Left cardiac atrium (tissue), 4 donors: ENCODE measurements at regions of chr2 and their contacts with region 1.

Region 1: DNA sequence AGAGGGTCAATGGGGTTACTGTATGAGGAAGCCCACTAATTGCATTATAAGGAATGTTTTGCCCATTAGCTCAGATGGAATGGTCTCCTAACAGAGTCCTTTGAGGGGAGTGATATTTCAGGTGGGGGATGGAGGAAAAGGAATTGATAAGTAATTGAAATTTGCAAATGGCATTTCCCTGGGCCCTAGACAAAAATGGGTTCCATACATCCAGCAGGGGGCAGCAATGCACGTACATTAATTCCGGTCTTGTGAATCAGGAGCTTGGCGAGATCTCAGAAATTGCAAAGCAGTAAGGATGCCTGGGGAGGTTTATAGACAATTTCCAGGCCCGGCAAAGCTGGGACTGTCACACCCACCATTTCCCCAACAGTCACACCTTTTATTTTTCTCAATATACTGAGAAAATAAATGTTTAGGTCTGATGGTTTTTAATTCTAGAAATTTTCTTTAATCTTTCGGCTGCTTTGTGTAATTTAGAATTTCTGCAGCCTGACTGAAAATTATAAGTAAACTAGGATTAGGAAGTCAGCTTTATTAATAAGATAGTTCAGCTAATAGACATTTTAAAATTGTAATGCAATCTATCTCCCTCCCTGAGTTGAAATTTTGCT is 122.8 kb downstream of the LYPD1 start:
- DNase-seq: peak; percentile 72
- ATAC-seq: peak; percentile 47 to 51

Region 2: GRCh38 chr2:133171393-133172004 is 624.3 kb after region 1 on chr2:
- intact Hi-C with region 1: loop called (anchors 5 to 10 kb)
- DNase-seq: no peak
- ATAC-seq: peak in 1 of 2 donors; percentile 24

Region 3: GRCh38 chr2:133844214-133844892 is 1297.2 kb after region 1 on chr2:
- intact Hi-C with region 1: loop called (anchors 2 to 5 kb)
- DNase-seq: peak; percentile 62
- ATAC-seq: peak; percentile 72 to 76